ENCODE measurements at regions of chr4 and their contacts with region 1.

Region 1: DNA sequence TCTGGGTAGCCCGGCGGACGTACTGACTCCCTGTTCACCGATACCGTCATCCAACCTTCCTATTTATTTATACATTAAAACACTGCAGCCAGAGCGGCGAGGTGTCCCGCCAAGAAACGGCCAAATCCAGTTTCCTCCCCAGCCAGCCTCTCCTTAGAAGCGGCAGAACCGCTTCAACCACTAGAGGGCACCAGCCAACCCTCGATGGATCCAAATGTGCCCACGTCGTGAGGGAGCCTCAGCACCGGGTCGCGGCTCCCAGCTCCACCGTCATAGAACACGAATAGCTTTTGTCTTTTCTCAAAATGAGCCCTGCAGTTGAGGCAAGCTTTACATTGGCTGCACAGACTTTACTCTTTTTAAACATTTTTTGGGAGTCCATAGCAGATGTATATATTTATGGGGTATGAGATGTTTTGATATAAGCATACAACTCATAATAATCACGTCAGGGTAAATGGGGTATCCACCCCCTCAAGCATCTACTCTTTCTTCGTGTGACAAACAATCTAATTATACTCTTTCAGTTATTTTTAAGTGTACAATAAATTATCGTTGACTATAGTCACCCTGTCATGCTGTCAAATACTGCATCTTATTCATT is 13.0 kb upstream of the HELT start:
- DNase-seq: peak; percentile 45 to 78 (median 66)
- ATAC-seq: peak; percentile 93
- H3K4me3 ChIP-seq: peak overlapping the region; percentile 2
- H3K4me3 Mint-ChIP-seq: peak overlapping the region; percentile 25 to 71 (median 60)
- H3K27ac ChIP-seq: no peak overlapping the region
- H3K27ac Mint-ChIP-seq: peak overlapping the region in 1 of 9 donors; percentile 8
- H3K4me1 ChIP-seq: peaks cover 0 to 3% of the 10 kb centered on the region in 2 donors
- H3K4me1 Mint-ChIP-seq: peaks cover 6 to 9% (median 7%) of the 10 kb centered on the region in 7 donors
- H3K27me3 ChIP-seq: no peaks in the 10 kb centered on the region
- H3K27me3 Mint-ChIP-seq: peaks cover 47 to 54% (median 52%) of the 10 kb centered on the region in 5 donors

Region 2: DNA sequence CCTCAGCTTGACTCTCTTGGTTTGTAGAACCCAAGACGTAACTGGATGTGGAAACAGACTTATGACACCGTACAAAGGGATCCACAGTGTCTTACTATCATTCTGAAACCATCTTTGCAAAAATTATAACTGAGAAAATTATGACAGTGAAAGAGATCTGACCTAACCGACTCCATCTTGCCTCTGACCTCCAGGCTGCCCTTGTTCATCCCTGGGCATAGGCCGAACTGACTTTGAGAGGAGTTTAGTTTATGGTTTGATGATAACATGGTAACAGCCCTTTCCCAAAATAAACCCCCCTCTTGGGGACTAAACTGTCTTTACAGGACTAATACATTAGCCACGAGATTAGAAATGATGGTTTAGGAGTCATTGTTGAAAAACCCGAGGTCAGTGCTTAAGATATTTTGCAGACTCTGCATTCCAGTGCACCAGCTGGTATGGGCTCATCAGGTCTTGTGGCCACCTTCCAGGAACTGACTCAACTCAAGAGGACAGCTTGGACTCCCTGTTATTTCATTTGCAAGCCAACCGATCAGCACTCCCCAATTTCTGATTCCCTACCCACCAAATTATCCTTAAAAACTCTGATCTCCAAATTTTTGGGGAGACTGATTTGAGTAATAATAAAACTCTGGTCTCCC is 405.7 kb before region 1 on chr4:
- CTCF ChIA-PET with region 1: no interaction called
- POLR2A ChIA-PET with region 1: no interaction called
- intact Hi-C with region 1: no loop called
- DNase-seq: no peak
- ATAC-seq: no peak
- H3K4me3 ChIP-seq: no peak overlapping the region
- H3K4me3 Mint-ChIP-seq: no peak overlapping the region
- H3K27ac ChIP-seq: no peak overlapping the region
- H3K27ac Mint-ChIP-seq: no peak overlapping the region
- H3K4me1 ChIP-seq: no peaks in the 10 kb centered on the region
- H3K4me1 Mint-ChIP-seq: peaks cover 4 to 20% (median 12%) of the 10 kb centered on the region in 7 donors
- H3K27me3 ChIP-seq: no peaks in the 10 kb centered on the region
- H3K27me3 Mint-ChIP-seq: peaks cover 0 to 27% (median 6%) of the 10 kb centered on the region in 5 donors

Region 3: DNA sequence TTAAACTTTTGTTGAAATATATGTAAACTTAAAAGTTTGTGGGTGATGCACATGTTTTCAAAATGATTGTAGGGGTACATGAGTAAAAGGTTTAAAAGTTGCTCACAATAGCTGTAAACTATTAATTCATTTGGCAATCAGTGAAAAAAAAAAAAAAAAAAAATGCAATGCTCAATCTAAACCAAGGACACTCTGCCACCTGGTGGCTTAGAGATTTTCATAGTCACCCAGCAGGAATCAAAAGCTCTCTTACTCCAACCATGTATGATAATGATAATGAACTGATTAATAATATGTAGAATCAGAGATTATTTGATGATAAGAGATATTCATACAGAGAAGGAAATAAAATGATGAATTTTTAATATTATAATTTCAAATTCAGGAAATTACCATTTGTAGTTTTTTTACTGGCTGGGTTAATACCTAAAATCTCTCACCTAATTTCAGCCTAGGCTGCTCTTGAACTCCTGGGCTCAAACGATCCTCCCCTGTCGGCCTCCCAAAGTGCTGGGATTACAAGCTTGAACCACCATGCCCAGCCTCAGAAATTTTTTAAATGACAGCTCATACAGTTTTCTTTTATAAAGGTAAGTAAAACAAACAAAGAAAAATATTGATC is 90.8 kb after region 1 on chr4:
- CTCF ChIA-PET with region 1: no interaction called
- POLR2A ChIA-PET with region 1: no interaction called
- intact Hi-C with region 1: loop called (anchors 1 kb)
- DNase-seq: peak in 6 of 9 donors; percentile 16 to 39 (median 27)
- ATAC-seq: peak; percentile 27
- H3K4me3 ChIP-seq: no peak overlapping the region
- H3K4me3 Mint-ChIP-seq: no peak overlapping the region
- H3K27ac ChIP-seq: no peak overlapping the region
- H3K27ac Mint-ChIP-seq: no peak overlapping the region
- H3K4me1 ChIP-seq: no peaks in the 10 kb centered on the region
- H3K4me1 Mint-ChIP-seq: no peaks in the 10 kb centered on the region
- H3K27me3 ChIP-seq: no peaks in the 10 kb centered on the region
- H3K27me3 Mint-ChIP-seq: peaks cover 9 to 30% (median 14%) of the 10 kb centered on the region in 5 donors

Region 4: GRCh38 chr4:185134307-185134869 is 129.1 kb after region 1 on chr4:
- CTCF ChIA-PET with region 1: no interaction called
- POLR2A ChIA-PET with region 1: no interaction called
- intact Hi-C with region 1: loop called in 1 of 2 experiments (anchors 1 kb)
- DNase-seq: peak in 6 of 9 donors; percentile 22 to 52 (median 40)
- ATAC-seq: peak; percentile 86
- H3K4me3 ChIP-seq: no peak overlapping the region
- H3K4me3 Mint-ChIP-seq: no peak overlapping the region
- H3K27ac ChIP-seq: no peak overlapping the region
- H3K27ac Mint-ChIP-seq: no peak overlapping the region
- H3K4me1 ChIP-seq: no peaks in the 10 kb centered on the region
- H3K4me1 Mint-ChIP-seq: no peaks in the 10 kb centered on the region
- H3K27me3 ChIP-seq: peaks cover 0 to 3% of the 10 kb centered on the region in 2 donors
- H3K27me3 Mint-ChIP-seq: peaks cover 29 to 68% (median 40%) of the 10 kb centered on the region in 5 donors

Region 5: DNA sequence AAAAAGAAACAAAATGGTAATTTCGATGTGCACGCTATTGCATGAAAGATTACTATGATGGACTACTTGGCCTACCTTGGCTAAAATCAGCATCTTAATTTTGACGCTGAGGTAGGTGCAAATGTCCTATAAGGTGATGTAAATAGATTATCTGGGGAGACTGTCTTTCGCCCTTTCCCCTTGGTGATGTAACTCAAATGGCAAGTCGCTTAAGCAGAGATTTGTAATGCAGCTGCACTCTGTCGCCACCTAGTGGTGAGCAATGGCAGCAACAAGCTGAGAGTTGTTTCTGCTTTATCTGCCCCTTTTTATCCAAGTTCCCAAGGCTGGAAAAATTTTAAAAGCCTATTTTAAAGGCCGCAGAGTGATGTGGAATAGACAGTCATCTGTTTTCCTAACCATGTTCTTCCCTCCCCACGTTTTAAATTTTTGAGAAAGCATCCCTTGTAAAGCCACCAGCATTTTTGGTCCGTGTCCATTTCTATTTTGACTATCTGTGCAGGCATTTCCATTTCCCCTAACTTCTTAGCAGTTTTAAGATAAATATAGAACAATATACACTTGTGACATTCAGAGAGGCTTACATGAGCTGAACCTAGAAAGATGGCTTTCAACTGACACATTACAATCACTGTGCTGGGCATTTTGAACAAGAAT is 592.3 kb after region 1 on chr4:
- CTCF ChIA-PET with region 1: no interaction called
- POLR2A ChIA-PET with region 1: no interaction called
- intact Hi-C with region 1: loop called in 1 of 2 experiments (anchors 1 kb)
- DNase-seq: peak; percentile 42 to 60 (median 56)
- ATAC-seq: peak; percentile 87
- H3K4me3 ChIP-seq: no peak overlapping the region
- H3K4me3 Mint-ChIP-seq: no peak overlapping the region
- H3K27ac ChIP-seq: no peak overlapping the region
- H3K27ac Mint-ChIP-seq: no peak overlapping the region
- H3K4me1 ChIP-seq: no peaks in the 10 kb centered on the region
- H3K4me1 Mint-ChIP-seq: peaks cover 0 to 4% (median 0%) of the 10 kb centered on the region in 7 donors
- H3K27me3 ChIP-seq: peaks cover 4 to 5% of the 10 kb centered on the region in 2 donors
- H3K27me3 Mint-ChIP-seq: peaks cover 18 to 33% (median 25%) of the 10 kb centered on the region in 5 donors

Measured in naive thymus-derived CD4-positive, alpha-beta T cell (primary cell).